ENCODE measurements at regions of chr21 and their contacts with region 1.

Region 1: GRCh38 chr21:39125752-39126485 is 57.3 kb downstream of the PSMG1 start:
- DNase-seq: peak; percentile 48
- CTCF ChIP-seq: peak; percentile 57

Region 2: GRCh38 chr21:38733973-38734546 is 391.9 kb before region 1 on chr21:
- in situ Hi-C with region 1: loop called (anchors 25 kb)
- DNase-seq: peak; percentile 65
- CTCF ChIP-seq: peak; percentile 95

Measured in GM13977 (cell line).